GM12878 (cell line): ENCODE measurements at regions of chr4 and their contacts with region 1.

Region 1: GRCh38 chr4:40672536-40673526 is 43.2 kb upstream of the RBM47 start:
- DNase-seq: peak; percentile 98
- ATAC-seq: peak; percentile 83
- H3K4me3 ChIP-seq: peak overlapping the region; percentile 24; the same call in 1 of the 2 replicates
- H3K27ac ChIP-seq: peak overlapping the region; percentile 86
- H3K4me1 ChIP-seq: peaks cover 41% of the 10 kb centered on the region
- H3K27me3 ChIP-seq: no peaks in the 10 kb centered on the region
- CTCF ChIP-seq: no peak
- EP300 ChIP-seq: peak; percentile 88 to 92
- POLR2A ChIP-seq: no peak
- RAD21 ChIP-seq: no peak

Region 2: GRCh38 chr4:40316782-40317635 is 355.8 kb before region 1 on chr4:
- CTCF ChIA-PET with region 1: interaction called, 10 read pairs
- POLR2A ChIA-PET with region 1: interaction called, 5 read pairs
- RAD21 ChIA-PET with region 1: interaction called, 7 read pairs
- SMC1A ChIA-PET with region 1: interaction called, 7 read pairs
- in situ Hi-C with region 1: no loop called
- intact Hi-C with region 1: no loop called
- DNase-seq: peak; percentile 78
- ATAC-seq: peak; percentile 86
- H3K4me3 ChIP-seq: peak overlapping the region; percentile 62
- H3K27ac ChIP-seq: peak overlapping the region; percentile 75
- H3K4me1 ChIP-seq: peaks cover 10% of the 10 kb centered on the region
- H3K27me3 ChIP-seq: no peaks in the 10 kb centered on the region
- CTCF ChIP-seq: peak; percentile 75 to 88 (median 82)
- EP300 ChIP-seq: no peak
- POLR2A ChIP-seq: 0 out of 2 replicates have a peak, but pooled peaks have one; percentile 32
- RAD21 ChIP-seq: peak; percentile 74

Region 3: DNA sequence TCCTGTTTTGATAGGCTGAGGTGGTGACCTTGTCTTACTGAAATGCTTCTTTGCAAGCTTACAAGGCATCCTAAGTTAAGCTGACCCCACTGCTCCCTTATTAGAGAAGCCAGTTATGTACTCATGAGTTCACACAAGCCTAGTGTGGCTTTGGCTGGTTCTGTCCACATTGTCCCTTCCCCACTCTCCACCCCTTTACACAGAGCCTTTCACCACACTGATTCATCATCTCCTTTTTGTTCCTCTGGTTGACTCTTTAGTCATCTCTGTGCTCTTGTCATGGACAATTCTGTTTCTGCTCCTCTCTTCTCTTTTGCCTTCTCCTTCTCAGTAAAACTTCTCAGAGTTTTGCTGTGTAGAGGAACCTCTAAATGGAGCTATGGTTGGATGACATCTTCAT is 332.8 kb before region 1 on chr4:
- CTCF ChIA-PET with region 1: no interaction called
- POLR2A ChIA-PET with region 1: no interaction called
- RAD21 ChIA-PET with region 1: no interaction called
- SMC1A ChIA-PET with region 1: no interaction called
- in situ Hi-C with region 1: no loop called
- intact Hi-C with region 1: no loop called
- DNase-seq: no peak
- ATAC-seq: no peak
- H3K4me3 ChIP-seq: no peak overlapping the region
- H3K27ac ChIP-seq: no peak overlapping the region
- H3K4me1 ChIP-seq: no peaks in the 10 kb centered on the region
- H3K27me3 ChIP-seq: 0 out of 4 replicates have a peak, but pooled peaks cover 0 to 3% of the 10 kb centered on the region in 2 experiments
- CTCF ChIP-seq: no peak
- EP300 ChIP-seq: no peak
- POLR2A ChIP-seq: no peak
- RAD21 ChIP-seq: no peak

Region 4: GRCh38 chr4:40550948-40551462 is 121.8 kb before region 1 on chr4:
- CTCF ChIA-PET with region 1: interaction called, 5 read pairs
- POLR2A ChIA-PET with region 1: no interaction called
- RAD21 ChIA-PET with region 1: interaction called, 3 read pairs
- SMC1A ChIA-PET with region 1: interaction called, 3 read pairs
- in situ Hi-C with region 1: no loop called
- intact Hi-C with region 1: loop called (anchors 5 kb)
- DNase-seq: peak; percentile 76
- ATAC-seq: peak; percentile 89
- H3K4me3 ChIP-seq: peak overlapping the region; percentile 20
- H3K27ac ChIP-seq: peak overlapping the region; percentile 47
- H3K4me1 ChIP-seq: peaks cover 18% of the 10 kb centered on the region; the same call in 1 of the 2 replicates
- H3K27me3 ChIP-seq: no peaks in the 10 kb centered on the region
- CTCF ChIP-seq: peak; percentile 42 to 53 (median 47); a peak in 5 of 6 replicates
- EP300 ChIP-seq: peak in 1 of 2 experiments; percentile 6; a peak in 1 of 4 replicates
- POLR2A ChIP-seq: no peak
- RAD21 ChIP-seq: peak; percentile 71

Region 5: GRCh38 chr4:40621592-40622512 is 51.0 kb before region 1 on chr4:
- CTCF ChIA-PET with region 1: interaction called, 9 read pairs
- POLR2A ChIA-PET with region 1: interaction called, 80 read pairs
- RAD21 ChIA-PET with region 1: interaction called, 82 read pairs
- SMC1A ChIA-PET with region 1: interaction called, 215 read pairs
- in situ Hi-C with region 1: no loop called
- intact Hi-C with region 1: loop called (anchors 1 kb)
- DNase-seq: peak; percentile 93
- ATAC-seq: peak; percentile 66
- H3K4me3 ChIP-seq: peak overlapping the region; percentile 58
- H3K27ac ChIP-seq: peak overlapping the region; percentile 93
- H3K4me1 ChIP-seq: peaks cover 38% of the 10 kb centered on the region
- H3K27me3 ChIP-seq: no peaks in the 10 kb centered on the region
- CTCF ChIP-seq: no peak
- EP300 ChIP-seq: peak; percentile 74 to 81
- POLR2A ChIP-seq: no peak; the same call in 1 of the 2 replicates
- RAD21 ChIP-seq: 0 out of 2 replicates have a peak, but pooled peaks have one; percentile 13

Region 6: DNA sequence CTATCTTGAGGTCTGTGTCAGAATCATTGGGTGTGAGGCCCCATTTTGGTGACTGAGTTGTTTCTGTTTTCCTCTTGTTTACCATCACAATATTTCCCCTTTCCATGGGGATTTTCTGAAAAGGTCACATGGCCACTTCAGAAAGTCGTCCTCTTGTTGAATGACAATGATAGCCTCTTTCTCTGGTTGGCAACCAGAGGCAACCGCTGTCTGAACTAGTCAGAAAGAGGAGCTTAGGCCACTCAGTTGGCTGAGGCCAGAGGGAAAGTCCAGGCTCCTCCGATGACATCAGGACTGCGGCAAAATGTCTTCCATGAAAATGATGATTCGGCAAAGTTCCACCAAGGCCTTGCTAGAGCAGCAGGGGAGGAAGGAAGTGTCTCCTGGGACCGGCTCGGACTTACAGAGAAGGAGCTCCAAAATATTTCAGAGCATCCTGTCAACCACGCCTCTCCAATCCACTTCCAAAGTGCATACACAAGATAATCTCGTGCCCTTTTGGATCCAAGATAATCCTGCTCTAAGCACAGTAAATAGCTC is 24.0 kb before region 1 on chr4:
- CTCF ChIA-PET with region 1: interaction called, 40 read pairs
- POLR2A ChIA-PET with region 1: interaction called, 3 read pairs
- RAD21 ChIA-PET with region 1: interaction called, 40 read pairs
- SMC1A ChIA-PET with region 1: interaction called, 39 read pairs
- in situ Hi-C with region 1: no loop called
- intact Hi-C with region 1: no loop called
- DNase-seq: no peak
- ATAC-seq: peak; percentile 84
- H3K4me3 ChIP-seq: no peak overlapping the region
- H3K27ac ChIP-seq: 0 out of 2 replicates have a peak overlapping the region, but pooled peaks have one; percentile 2
- H3K4me1 ChIP-seq: peaks cover 17% of the 10 kb centered on the region
- H3K27me3 ChIP-seq: no peaks in the 10 kb centered on the region
- CTCF ChIP-seq: no peak
- EP300 ChIP-seq: no peak
- POLR2A ChIP-seq: no peak
- RAD21 ChIP-seq: no peak

Region 7: GRCh38 chr4:40685300-40685699 is 12.5 kb after region 1 on chr4:
- CTCF ChIA-PET with region 1: interaction called, 11 read pairs
- POLR2A ChIA-PET with region 1: interaction called, 3 read pairs
- RAD21 ChIA-PET with region 1: interaction called, 8 read pairs
- SMC1A ChIA-PET with region 1: interaction called, 13 read pairs
- in situ Hi-C with region 1: no loop called
- intact Hi-C with region 1: no loop called
- DNase-seq: no peak
- ATAC-seq: no peak
- H3K4me3 ChIP-seq: no peak overlapping the region
- H3K27ac ChIP-seq: no peak overlapping the region
- H3K4me1 ChIP-seq: peaks cover 5% of the 10 kb centered on the region
- H3K27me3 ChIP-seq: no peaks in the 10 kb centered on the region
- CTCF ChIP-seq: no peak
- EP300 ChIP-seq: no peak
- POLR2A ChIP-seq: no peak
- RAD21 ChIP-seq: no peak

Region 8: GRCh38 chr4:42627885-42628646 is 1955.2 kb after region 1 on chr4:
- CTCF ChIA-PET with region 1: no interaction called
- POLR2A ChIA-PET with region 1: no interaction called
- RAD21 ChIA-PET with region 1: no interaction called
- SMC1A ChIA-PET with region 1: no interaction called
- in situ Hi-C with region 1: loop called (anchors 25 kb)
- intact Hi-C with region 1: no loop called
- DNase-seq: peak; percentile 97
- ATAC-seq: peak; percentile 92
- H3K4me3 ChIP-seq: peak overlapping the region; percentile 25; the same call in 1 of the 2 replicates
- H3K27ac ChIP-seq: peak overlapping the region; percentile 79
- H3K4me1 ChIP-seq: peaks cover 30% of the 10 kb centered on the region
- H3K27me3 ChIP-seq: no peaks in the 10 kb centered on the region
- CTCF ChIP-seq: no peak
- EP300 ChIP-seq: peak in 1 of 2 experiments; percentile 82; a peak in 3 of 4 replicates
- POLR2A ChIP-seq: peak; percentile 75
- RAD21 ChIP-seq: peak; percentile 32; the same call in 1 of the 2 replicates